Activated CD4-positive, alpha-beta T cell treated with anti-CD3 and anti-CD28 coated beads, Interleukin-2, amount 10 ng/mL, durations not matched to agents 24 days and 14 days (primary cell): ENCODE measurements at regions of chr4 and their contacts with region 1.

Region 1: GRCh38 chr4:119212234-119212963 is at the start of gene USP53:
- DNase-seq: peak; percentile 98
- H3K4me3 Mint-ChIP-seq: peak within 1 kb of the TSS; percentile 95
- H3K27ac Mint-ChIP-seq: peak within 1 kb of the TSS; percentile 93
- H3K4me1 Mint-ChIP-seq: peaks cover 36% of the 10 kb centered on the region
- H3K27me3 Mint-ChIP-seq: no peaks in the 10 kb centered on the region
- total RNA-seq, gene USP53: 6.2 and 7.3 TPM in 2 replicates

Region 2: GRCh38 chr4:118684873-118685811 is 527.3 kb before region 1 on chr4 and contains the start of gene METTL14:
- intact Hi-C with region 1: loop called (anchors 1 kb)
- DNase-seq: peak; percentile 96
- H3K4me3 Mint-ChIP-seq: peak within 1 kb of the TSS; percentile 98
- H3K27ac Mint-ChIP-seq: peak within 1 kb of the TSS; percentile 95
- H3K4me1 Mint-ChIP-seq: peaks cover 11% of the 10 kb centered on the region
- H3K27me3 Mint-ChIP-seq: peaks cover 2% of the 10 kb centered on the region
- total RNA-seq, gene METTL14: 50.2 and 51.9 TPM in 2 replicates

Region 3: DNA sequence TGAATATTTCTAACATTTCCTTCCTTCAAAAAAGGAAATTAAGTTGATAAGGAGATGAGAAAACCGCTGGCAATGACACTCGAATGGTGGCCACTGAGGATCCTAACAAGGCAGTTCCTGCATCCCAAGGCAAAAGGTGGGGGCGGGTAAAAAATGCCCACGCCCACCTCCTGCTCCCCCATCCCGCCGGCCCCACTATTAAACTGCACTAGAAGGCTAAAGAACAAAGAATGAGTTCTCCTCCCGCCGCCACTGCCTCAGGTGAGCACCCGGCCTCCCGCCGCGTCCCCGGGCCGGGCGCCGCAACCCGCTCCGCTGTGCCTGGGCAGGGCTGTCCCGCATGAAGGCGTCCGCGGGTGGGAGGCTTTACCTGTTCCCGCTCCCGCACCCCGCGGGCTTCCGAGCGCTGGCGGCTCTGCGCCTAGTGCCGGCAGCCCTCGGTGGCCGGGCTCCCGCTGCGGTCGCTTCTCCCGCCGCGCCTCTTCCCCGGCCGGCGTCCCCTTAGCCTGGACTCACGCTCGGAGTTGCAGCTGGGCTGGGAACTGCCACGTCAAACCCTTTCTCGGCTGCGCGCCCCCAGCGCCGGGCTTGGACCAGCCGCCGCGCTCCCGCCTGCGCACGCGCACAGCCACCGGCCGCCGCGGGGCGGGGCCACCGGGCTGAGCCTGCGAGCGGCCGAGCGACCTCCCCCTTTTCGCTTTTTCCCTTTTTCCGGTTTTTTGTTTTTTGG is 376.7 kb before region 1 on chr4 and contains the start of gene SEC24D:
- intact Hi-C with region 1: loop called (anchors 5 kb)
- DNase-seq: peak; percentile 97
- H3K4me3 Mint-ChIP-seq: peak within 1 kb of the TSS; percentile 94
- H3K27ac Mint-ChIP-seq: peak within 1 kb of the TSS; percentile 95
- H3K4me1 Mint-ChIP-seq: peaks cover 31% of the 10 kb centered on the region
- H3K27me3 Mint-ChIP-seq: peaks cover 6% of the 10 kb centered on the region
- total RNA-seq, gene SEC24D: 43.9 and 45.3 TPM in 2 replicates

Region 4: DNA sequence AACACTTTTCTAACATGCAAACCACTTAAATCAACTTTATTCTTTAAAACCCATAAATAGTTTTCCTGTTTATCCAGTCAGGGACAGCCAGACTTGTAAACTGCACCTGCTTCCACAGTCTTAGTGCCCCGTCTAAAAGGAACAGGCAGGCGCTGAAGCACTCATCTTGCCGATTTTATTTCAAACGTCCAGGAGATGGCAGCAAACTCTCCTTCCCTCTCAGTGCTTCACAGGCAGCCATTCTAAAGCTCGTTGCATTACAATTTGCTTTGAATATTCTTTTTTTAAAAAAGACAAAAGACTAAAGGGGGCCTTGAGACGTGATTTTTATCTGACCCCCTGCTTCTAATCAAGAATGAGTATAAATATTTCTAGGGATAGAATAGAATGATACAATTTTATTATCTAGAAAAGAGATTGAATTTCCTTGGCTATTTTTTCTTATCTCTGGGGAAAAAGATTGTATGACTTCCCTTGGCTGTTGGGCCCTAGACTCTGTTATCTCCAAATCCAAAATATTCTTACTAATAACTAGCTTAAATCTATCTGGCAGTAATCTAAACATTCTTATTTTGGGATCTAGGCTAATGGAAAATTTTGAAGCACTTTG is 170.3 kb before region 1 on chr4:
- intact Hi-C with region 1: loop called (anchors 1 kb)
- DNase-seq: peak; percentile 85
- H3K4me3 Mint-ChIP-seq: no peak overlapping the region
- H3K27ac Mint-ChIP-seq: no peak overlapping the region
- H3K4me1 Mint-ChIP-seq: peaks cover 5% of the 10 kb centered on the region
- H3K27me3 Mint-ChIP-seq: peaks cover 4% of the 10 kb centered on the region

Region 5: DNA sequence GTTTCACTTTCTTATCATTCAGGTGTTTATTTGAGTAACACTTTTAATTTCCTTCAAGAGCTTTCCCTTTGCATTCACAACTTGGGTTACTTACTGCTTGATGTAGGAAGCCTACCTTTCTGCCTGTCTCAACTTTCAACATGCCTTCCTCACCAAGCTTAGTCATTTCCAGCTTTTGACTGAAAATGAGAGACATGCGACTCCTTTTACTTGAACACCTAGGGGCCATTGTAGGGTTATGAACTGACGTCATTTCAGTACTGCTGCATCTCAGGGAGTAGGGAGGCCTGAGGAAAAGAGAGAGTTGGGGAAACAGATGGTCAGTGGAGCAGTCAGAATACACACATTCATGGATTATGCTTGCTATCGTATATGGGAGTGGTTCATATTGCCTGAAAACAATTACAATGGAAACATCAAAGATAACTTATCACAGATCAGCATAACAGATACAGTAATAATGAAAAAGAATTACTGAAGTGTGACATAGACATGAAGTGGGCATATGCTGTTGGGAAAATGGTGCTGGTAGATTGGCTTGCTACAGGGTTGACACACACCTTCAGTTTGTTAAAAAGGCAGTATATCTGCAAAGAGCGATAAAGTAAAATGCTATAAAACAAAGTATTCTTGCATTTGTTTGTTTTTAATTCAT is 25.8 kb after region 1 on chr4:
- intact Hi-C with region 1: loop called (anchors 1 kb)
- DNase-seq: peak; percentile 78
- H3K4me3 Mint-ChIP-seq: peak overlapping the region; percentile 4
- H3K27ac Mint-ChIP-seq: peak overlapping the region; percentile 78
- H3K4me1 Mint-ChIP-seq: peaks cover 23% of the 10 kb centered on the region
- H3K27me3 Mint-ChIP-seq: no peaks in the 10 kb centered on the region

Region 6: GRCh38 chr4:119286377-119287002 is 74.1 kb after region 1 on chr4:
- intact Hi-C with region 1: loop called (anchors 2 kb)
- DNase-seq: peak; percentile 78
- H3K4me3 Mint-ChIP-seq: no peak overlapping the region
- H3K27ac Mint-ChIP-seq: no peak overlapping the region
- H3K4me1 Mint-ChIP-seq: peaks cover 14% of the 10 kb centered on the region
- H3K27me3 Mint-ChIP-seq: no peaks in the 10 kb centered on the region

Region 7: GRCh38 chr4:119300101-119300978 is 87.9 kb after region 1 on chr4:
- intact Hi-C with region 1: loop called (anchors 1 kb)
- DNase-seq: peak; percentile 98
- H3K4me3 Mint-ChIP-seq: peak overlapping the region; percentile 85
- H3K27ac Mint-ChIP-seq: peak overlapping the region; percentile 99
- H3K4me1 Mint-ChIP-seq: peaks cover 35% of the 10 kb centered on the region
- H3K27me3 Mint-ChIP-seq: peaks cover 3% of the 10 kb centered on the region